Activated naive CD4-positive, alpha-beta T cell treated with anti-CD3 and anti-CD28 coated beads, Interleukin-2, amount 10 ng/mL, durations not matched to agents 7 days and 5 days (primary cell): ENCODE measurements at regions of chr1 and their contacts with region 1.

Region 1: GRCh38 chr1:7667625-7668218 is 103.4 kb upstream of the VAMP3 start:
- DNase-seq: peak; percentile 87
- H3K4me3 Mint-ChIP-seq: no peak overlapping the region
- H3K27ac Mint-ChIP-seq: no peak overlapping the region
- H3K4me1 Mint-ChIP-seq: no peaks in the 10 kb centered on the region
- H3K27me3 Mint-ChIP-seq: peaks cover 18% of the 10 kb centered on the region

Region 2: GRCh38 chr1:7501084-7501491 is 166.6 kb before region 1 on chr1:
- CTCF ChIA-PET with region 1: no interaction called
- DNase-seq: no peak
- H3K4me3 Mint-ChIP-seq: no peak overlapping the region
- H3K27ac Mint-ChIP-seq: no peak overlapping the region
- H3K4me1 Mint-ChIP-seq: no peaks in the 10 kb centered on the region
- H3K27me3 Mint-ChIP-seq: no peaks in the 10 kb centered on the region

Region 3: DNA sequence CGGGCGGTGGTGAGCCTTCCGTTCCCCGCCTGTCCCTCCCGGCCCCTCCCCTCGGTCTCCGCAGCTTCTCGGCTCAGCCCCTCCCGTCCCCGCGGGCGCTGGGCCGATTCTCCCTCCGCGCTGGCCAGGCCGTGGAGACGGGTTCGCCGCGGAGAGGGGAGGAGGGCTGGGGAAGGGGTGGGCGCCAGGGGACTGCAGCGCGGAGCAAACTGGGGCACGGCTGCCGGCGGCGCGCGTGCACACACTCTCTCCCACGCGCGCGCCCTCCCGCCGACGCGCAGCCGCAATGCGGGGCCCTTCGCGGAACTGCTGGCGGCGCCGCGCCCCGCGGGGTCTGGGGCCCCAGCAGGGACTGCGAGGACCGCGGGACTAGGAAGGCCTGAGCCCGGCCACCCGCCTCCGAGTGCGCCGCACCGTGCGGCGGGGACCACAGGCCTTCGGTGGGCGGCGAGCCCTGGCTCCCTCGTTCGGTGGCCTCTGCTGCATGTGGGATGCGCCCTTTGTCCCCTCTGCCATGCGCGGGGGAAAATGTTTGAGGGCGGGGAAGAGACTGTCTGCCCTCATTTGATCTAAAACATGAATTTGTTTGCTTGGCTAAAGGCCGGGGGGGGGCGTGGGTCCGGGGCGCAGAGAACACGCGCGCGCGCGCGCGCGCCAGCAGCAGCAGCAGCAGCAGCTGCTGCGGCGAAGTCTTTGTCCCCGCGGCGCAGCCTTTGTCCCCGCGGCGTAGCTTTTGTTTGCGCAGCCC is 12.7 kb after region 1 on chr1:
- CTCF ChIA-PET with region 1: interaction called, 34 read pairs
- DNase-seq: peak; percentile 43
- H3K4me3 Mint-ChIP-seq: peak overlapping the region; percentile 73
- H3K27ac Mint-ChIP-seq: no peak overlapping the region
- H3K4me1 Mint-ChIP-seq: no peaks in the 10 kb centered on the region
- H3K27me3 Mint-ChIP-seq: peaks cover 58% of the 10 kb centered on the region

Region 4: GRCh38 chr1:7743346-7743745 is 75.6 kb after region 1 on chr1:
- CTCF ChIA-PET with region 1: interaction called, 16 read pairs
- DNase-seq: no peak
- H3K4me3 Mint-ChIP-seq: no peak overlapping the region
- H3K27ac Mint-ChIP-seq: no peak overlapping the region
- H3K4me1 Mint-ChIP-seq: no peaks in the 10 kb centered on the region
- H3K27me3 Mint-ChIP-seq: peaks cover 6% of the 10 kb centered on the region

Region 5: DNA sequence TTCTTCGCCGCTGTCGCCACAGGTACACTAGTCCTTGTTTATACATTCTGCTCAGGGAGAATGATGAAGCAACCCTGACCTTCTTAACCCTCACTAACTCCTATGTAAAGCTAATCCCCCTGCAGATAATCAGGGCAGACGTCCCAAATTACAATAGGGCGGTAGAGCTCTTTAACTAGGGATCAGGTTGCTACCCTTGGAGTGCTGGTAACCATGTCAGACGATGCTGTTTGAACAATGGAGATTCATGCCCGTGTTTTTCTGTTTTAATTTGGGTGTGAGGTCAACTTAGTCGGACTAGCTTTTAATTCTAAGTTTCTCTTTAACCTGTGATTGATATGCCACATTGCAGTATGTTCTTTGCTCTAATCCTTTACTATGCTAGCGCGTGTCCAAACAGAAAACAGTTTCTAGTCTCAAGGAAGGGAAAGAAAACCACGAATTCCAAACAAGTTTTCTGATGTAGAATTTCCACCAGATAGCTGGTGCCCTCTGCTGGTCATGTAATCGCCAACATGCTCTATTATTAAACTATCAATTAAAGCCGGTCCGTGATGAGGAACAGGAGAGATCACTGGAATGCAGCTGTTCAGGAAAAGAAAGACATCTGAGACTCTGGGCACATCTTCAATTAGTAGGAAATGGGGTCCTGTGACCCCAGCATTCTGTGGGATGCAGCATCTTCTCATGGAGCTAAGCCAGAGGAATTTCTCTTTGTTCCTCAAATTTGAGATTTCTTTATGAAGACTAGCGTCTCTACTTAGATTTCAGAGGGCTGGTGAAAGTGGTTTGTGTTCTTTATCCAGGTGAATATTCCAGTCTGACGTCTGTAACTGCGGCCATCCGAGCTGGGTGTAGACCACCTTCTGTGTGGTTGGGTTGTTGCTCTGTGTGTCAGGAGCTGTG is 85.0 kb after region 1 on chr1:
- CTCF ChIA-PET with region 1: interaction called, 297 read pairs
- DNase-seq: peak; percentile 62
- H3K4me3 Mint-ChIP-seq: no peak overlapping the region
- H3K27ac Mint-ChIP-seq: no peak overlapping the region
- H3K4me1 Mint-ChIP-seq: peaks cover 13% of the 10 kb centered on the region
- H3K27me3 Mint-ChIP-seq: peaks cover 13% of the 10 kb centered on the region

Region 6: GRCh38 chr1:7902478-7903085 is 234.9 kb after region 1 on chr1:
- CTCF ChIA-PET with region 1: interaction called, 36 read pairs
- DNase-seq: peak; percentile 65
- H3K4me3 Mint-ChIP-seq: no peak overlapping the region
- H3K27ac Mint-ChIP-seq: no peak overlapping the region
- H3K4me1 Mint-ChIP-seq: peaks cover 4% of the 10 kb centered on the region
- H3K27me3 Mint-ChIP-seq: peaks cover 12% of the 10 kb centered on the region